GM18951 (cell line): ENCODE measurements at regions of chr4 and their contacts with region 1.

Region 1: DNA sequence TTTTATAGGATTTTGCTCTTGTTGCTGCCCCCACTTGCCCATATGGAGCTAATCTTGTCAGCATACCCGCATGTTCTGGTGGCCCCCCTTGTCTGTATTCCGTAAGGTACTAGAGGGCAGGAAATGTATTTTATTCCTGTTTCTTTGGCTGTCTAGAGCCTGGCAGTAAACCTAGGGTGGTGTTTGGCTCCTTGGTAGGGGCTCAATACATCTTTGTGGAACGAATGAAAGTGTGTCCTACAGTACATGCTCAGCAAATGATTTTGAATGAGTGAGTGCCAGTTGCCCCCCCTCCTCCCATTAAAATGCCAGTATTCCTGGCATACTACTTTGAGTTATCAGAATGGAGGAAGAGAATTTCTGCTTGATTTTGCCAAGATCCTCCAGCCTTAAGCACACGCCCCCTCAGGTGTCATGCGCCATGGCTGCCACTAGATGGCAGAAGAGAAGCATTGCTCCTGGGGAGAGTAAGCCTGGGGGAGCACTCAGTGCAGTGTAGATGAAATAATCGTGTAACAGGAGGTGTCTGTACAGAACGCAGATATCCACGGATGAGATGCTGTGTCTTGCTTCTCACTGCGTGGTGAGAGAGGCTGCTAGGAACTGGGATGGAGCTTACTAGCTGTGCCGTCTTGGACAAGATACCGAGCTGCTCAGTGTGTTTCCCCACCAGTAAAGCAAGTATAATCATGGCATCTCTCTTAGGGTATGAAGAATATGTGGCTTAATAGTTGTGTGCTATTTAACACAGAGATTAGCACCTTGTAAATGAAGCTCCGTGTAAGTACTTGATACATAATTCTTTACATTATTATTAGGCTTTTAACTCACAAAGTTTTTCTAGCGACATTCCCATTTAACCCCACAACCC is 17.2 kb upstream of the RNF212 start:
- POLR2A ChIP-seq: no peak

Region 2: DNA sequence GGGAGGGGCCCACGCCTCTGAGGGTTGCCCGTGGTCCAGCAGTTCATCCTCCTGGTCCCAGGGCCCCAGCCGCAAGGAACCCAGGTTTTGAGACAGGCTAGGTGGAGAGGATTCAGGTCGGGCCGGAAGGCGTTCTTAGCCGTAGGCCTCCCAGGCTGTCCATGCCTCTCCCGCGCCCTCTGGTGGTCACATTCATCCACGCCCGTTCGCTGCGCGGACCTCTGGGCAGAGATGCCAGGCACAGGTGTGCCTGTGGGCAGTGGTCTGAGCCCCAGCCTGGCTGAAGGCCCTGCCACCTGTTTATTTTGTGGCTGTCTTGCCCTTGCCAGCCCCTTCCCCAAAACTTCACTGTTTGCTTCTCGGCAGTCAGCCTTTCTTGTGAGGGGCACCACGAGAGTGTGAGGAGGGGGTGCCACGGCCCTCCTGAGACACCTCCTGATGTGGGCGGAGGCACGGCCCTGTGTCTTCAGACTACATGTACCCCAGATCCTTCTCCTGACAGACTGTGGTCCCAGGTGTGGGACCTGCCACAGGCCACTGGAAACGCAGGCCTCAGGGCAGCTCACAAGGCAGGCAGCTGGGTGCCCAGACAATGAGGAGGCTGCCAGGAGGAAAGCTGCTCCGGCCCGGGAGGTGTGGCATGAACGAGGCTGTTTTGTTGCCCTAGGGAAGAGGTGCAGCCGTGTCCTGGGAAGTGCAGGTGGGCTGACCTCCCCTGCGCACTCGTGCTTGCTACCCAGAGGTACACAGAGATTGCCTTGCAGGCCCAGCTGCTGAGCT is 221.5 kb after region 1 on chr4:
- in situ Hi-C with region 1: loop called (anchors 10 kb)
- POLR2A ChIP-seq: no peak

Region 3: DNA sequence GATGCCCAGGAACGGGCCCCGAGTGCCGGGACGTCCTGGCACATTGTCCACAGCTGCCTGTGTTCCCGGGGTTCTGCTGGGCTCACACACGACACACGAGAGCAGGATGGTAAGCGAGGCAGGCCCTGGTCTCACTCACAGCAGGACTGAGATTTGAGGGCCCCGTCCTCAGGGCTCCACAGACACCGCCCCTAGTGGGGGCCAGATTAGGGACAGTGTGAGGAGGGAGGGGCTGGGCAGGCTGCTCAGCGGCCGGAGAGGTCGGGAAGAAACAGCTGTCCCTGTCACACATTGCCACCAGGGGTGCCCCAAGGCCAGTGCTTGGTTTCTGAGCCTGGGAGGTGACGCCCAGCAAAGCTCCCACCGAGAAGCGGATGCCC is 246.7 kb after region 1 on chr4:
- in situ Hi-C with region 1: no loop called
- POLR2A ChIP-seq: no peak

Region 4: DNA sequence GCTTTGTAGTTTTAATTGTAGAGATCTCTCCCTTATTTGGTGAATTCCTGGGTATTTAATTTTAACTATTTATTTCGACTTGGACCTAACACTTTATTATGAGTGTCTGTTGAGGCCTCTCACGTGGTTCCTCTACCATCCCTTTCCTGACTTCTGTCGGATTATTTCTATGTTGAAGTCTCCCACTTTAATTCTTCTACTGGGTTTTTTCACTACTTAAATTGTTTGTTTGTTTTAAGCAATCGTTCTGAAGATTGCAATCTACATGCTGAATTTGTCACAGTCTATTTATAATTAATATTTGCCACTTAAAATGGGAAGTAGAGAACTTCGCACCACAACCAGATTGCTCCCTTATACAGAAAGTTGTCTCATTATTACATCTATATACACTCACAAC is 296.5 kb after region 1 on chr4:
- in situ Hi-C with region 1: no loop called
- POLR2A ChIP-seq: no peak